Natural killer cell (primary cell): ENCODE measurements at regions of chr3 and their contacts with region 1.

Region 1: DNA sequence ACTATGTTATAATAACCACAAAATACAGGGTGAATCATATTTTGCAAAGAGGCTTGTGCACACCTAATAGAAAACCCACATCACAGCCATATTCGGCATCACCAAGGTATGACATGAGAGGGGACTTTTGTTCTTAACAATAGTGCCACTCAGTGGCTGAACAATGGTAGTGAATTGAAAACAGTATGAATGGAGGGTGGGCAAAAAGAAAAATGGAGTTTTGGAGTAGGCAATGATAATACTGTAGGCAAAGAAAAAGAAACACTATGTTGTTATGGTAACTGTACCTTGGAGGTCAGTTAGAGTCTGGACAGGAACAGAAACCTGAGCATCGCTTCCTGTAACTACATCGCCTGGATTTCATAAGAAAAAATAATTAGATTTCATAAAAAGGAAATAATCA is 348.6 kb downstream of the PLCL2 start:
- DNase-seq: peak in 1 of 2 donors; percentile 79
- ATAC-seq: peak; percentile 88 to 100 (median 99)
- H3K4me3 ChIP-seq: no peak overlapping the region
- H3K4me3 Mint-ChIP-seq: no peak overlapping the region
- H3K27ac ChIP-seq: no peak overlapping the region
- H3K27ac Mint-ChIP-seq: no peak overlapping the region
- H3K4me1 ChIP-seq: no peaks in the 10 kb centered on the region
- H3K4me1 Mint-ChIP-seq: peaks cover 0 to 9% of the 10 kb centered on the region in 2 donors
- H3K27me3 ChIP-seq: no peaks in the 10 kb centered on the region
- H3K27me3 Mint-ChIP-seq: no peaks in the 10 kb centered on the region
- CTCF ChIP-seq: peak; percentile 86

Region 2: GRCh38 chr3:16828815-16829214 is 404.6 kb before region 1 on chr3:
- intact Hi-C with region 1: loop called (anchors 1 kb)
- DNase-seq: peak; percentile 22 to 81
- ATAC-seq: peak; percentile 64 to 81 (median 68)
- H3K4me3 ChIP-seq: no peak overlapping the region
- H3K4me3 Mint-ChIP-seq: no peak overlapping the region
- H3K27ac ChIP-seq: no peak overlapping the region
- H3K27ac Mint-ChIP-seq: no peak overlapping the region
- H3K4me1 ChIP-seq: peaks cover 14% of the 10 kb centered on the region
- H3K4me1 Mint-ChIP-seq: peaks cover 11 to 15% of the 10 kb centered on the region in 2 donors
- H3K27me3 ChIP-seq: no peaks in the 10 kb centered on the region
- H3K27me3 Mint-ChIP-seq: peaks cover 3 to 9% of the 10 kb centered on the region in 2 donors
- CTCF ChIP-seq: peak; percentile 27